Dendritic cell treated with granulocyte-macrophage colony-stimulating factor and Interleukin-4, amounts not matched to agents 40 ng/mL and 50 ng/mL, for 4 days (primary cell): ENCODE measurements at regions of chr2 and their contacts with region 1.

Region 1: GRCh38 chr2:196291873-196292800 is 120.8 kb upstream of the STK17B start:
- H3K4me3 Mint-ChIP-seq: no peak overlapping the region
- H3K27ac Mint-ChIP-seq: no peak overlapping the region
- H3K4me1 Mint-ChIP-seq: peaks cover 18% of the 10 kb centered on the region
- H3K27me3 Mint-ChIP-seq: no peaks in the 10 kb centered on the region

Region 2: DNA sequence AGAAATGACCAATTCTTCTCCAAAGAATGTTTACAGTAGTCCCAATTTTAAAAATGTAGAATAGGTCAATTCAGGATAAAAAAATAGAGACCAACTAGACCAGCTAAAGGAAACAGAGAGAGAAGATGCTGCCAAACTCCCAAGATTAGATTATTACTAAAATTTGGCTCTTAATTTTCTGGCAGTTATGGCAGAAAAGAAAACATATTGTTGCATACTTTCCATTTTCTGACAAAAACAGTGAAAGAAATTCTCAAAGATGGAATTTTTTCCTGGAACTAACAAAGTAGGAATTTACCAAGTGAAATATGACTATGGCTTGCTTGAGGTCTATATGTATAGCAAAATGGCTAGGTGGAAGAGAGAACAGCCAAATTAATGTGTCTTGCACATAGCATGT is 17.6 kb after region 1 on chr2:
- intact Hi-C with region 1: no loop called
- H3K4me3 Mint-ChIP-seq: no peak overlapping the region
- H3K27ac Mint-ChIP-seq: no peak overlapping the region
- H3K4me1 Mint-ChIP-seq: no peaks in the 10 kb centered on the region
- H3K27me3 Mint-ChIP-seq: peaks cover 1% of the 10 kb centered on the region

Region 3: DNA sequence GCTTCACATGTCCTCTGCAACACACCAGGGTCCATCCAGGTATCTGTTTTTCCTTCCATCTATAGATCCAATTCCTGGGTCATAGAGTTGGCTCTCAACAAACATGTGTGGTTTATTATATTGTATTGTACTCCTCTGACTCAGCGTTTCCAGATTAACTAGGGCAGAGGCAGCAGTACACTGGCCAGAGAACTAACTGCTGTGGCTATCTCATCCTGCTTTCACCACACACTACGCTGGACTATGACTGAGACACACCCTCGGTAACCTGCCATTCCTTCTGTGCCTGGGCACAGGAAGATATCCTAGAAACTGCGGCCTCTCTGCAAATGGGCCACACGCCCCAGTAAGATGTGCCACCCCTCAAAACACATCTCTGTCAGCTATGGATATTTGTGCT is 39.0 kb after region 1 on chr2:
- intact Hi-C with region 1: no loop called
- H3K4me3 Mint-ChIP-seq: no peak overlapping the region
- H3K27ac Mint-ChIP-seq: no peak overlapping the region
- H3K4me1 Mint-ChIP-seq: peaks cover 11% of the 10 kb centered on the region
- H3K27me3 Mint-ChIP-seq: no peaks in the 10 kb centered on the region

Region 4: DNA sequence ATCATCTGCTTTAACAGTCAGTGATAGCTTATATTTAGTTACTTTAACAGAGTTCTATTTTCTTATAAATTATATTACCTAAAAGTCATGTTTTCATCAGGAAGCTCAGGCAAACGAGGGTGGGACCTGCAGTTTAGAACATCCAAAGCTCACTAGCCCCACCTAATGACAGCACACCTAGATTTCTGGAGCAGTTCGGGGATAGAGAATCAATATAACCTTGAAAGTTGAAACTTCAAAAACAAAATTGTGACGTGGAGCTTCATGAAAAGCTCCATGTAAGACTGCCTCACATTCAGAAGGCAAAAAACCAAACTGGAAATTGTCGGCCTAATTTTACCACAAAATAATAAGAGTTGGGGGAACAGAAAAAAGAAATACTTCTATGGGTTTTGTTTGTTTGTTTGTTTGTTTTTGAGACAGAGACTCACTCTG is 161.5 kb after region 1 on chr2:
- intact Hi-C with region 1: loop called (anchors 5 kb)
- H3K4me3 Mint-ChIP-seq: no peak overlapping the region
- H3K27ac Mint-ChIP-seq: no peak overlapping the region
- H3K4me1 Mint-ChIP-seq: no peaks in the 10 kb centered on the region
- H3K27me3 Mint-ChIP-seq: peaks cover 8% of the 10 kb centered on the region

Region 5: GRCh38 chr2:196750982-196751635 is 459.0 kb after region 1 on chr2:
- intact Hi-C with region 1: loop called (anchors 10 kb)
- H3K4me3 Mint-ChIP-seq: peak overlapping the region; percentile 13
- H3K27ac Mint-ChIP-seq: peak overlapping the region; percentile 16
- H3K4me1 Mint-ChIP-seq: peaks cover 25% of the 10 kb centered on the region
- H3K27me3 Mint-ChIP-seq: no peaks in the 10 kb centered on the region